Activated CD8-positive, alpha-beta memory T cell treated with anti-CD3 and anti-CD28 coated beads, Interleukin-2, amount 10 ng/mL, durations not matched to agents 7 days and 5 days (primary cell): ENCODE measurements at regions of chr3 and their contacts with region 1.

Region 1: GRCh38 chr3:129593595-129594339 is 12.7 kb downstream of the PLXND1 start:
- DNase-seq: peak; percentile 90
- ATAC-seq: peak; percentile 69
- H3K4me3 Mint-ChIP-seq: peak overlapping the region; percentile 41
- H3K27ac Mint-ChIP-seq: peak overlapping the region; percentile 72
- H3K4me1 Mint-ChIP-seq: peaks cover 28% of the 10 kb centered on the region
- H3K27me3 Mint-ChIP-seq: peaks cover 67% of the 10 kb centered on the region

Region 2: DNA sequence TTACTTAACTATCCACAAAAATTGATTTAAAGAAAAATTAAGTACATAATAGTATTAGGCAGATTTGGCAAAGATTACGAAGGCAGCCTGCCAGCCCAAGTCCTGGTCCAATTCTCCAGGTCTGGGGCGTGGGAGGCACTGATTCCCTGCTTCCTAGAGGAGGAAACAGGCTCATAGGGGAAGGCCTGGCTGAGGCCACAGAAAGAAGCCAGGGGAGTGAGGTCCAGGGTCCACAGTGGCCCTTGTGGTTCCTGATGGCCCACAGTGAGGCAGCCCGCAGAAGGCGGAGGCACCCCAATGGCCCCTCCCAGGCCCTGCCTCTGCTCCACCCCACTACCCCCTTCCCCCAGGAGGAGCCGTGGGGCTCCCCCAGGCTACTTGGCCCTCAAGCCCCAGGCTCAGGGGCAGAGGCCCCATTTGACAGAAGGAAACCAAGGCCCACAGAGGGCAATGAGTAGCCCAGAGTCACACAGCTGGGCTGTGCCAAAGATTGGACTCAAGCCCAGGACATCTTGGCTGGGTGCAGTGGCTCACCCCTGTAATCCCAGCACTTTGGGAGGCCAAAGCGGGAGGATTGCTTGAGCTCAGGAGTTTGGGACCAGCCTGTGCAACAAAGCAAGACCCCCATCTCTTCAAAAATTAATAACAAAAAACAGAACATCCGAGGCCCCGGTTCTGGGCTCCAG is 29.8 kb before region 1 on chr3:
- CTCF ChIA-PET with region 1: no interaction called
- DNase-seq: no peak
- ATAC-seq: no peak
- H3K4me3 Mint-ChIP-seq: no peak overlapping the region
- H3K27ac Mint-ChIP-seq: no peak overlapping the region
- H3K4me1 Mint-ChIP-seq: peaks cover 2% of the 10 kb centered on the region
- H3K27me3 Mint-ChIP-seq: no peaks in the 10 kb centered on the region

Region 3: DNA sequence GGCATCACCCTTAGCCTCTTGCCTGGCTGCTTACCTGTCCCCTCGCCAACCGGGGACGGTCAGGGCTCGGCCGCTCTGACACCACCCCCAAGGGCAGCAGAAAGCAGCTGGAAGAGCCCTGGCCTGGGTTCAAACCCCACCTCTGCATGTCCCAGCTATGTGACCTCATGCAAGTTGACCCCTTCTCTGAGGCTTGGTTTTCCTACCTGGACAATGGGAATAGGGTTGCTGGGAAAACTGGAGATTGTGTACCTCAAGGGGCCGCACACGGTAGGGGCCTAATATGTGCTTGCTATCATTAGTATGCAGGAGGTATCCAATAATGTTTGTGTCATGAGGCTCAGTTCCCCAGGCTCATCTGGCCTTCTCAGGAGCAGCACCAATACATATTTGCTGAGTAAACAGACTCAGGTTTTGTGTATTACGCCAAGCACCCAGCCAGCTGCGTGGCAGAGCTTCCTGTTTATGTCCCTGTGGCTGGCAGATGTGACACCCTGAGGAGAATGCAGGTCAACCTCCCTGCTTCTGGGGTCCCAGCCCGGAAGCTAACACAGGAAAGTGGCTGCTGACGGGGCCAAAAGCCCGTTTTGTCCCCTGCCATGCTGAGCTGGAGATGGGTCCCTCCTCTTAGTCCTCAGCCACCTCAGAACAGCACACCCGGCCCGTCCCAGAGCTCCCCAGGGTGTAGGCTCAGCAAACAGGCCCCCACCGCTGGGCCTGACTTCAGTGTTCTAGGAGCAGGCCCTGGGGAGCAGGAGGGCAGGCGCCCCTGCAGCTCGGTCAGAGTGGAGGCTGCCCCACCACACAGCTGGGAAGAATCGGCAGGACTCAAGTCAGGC is 17.0 kb before region 1 on chr3:
- CTCF ChIA-PET with region 1: interaction called, 10 read pairs
- DNase-seq: peak; percentile 84
- ATAC-seq: peak; percentile 82
- H3K4me3 Mint-ChIP-seq: no peak overlapping the region
- H3K27ac Mint-ChIP-seq: peak overlapping the region; percentile 88
- H3K4me1 Mint-ChIP-seq: peaks cover 27% of the 10 kb centered on the region
- H3K27me3 Mint-ChIP-seq: no peaks in the 10 kb centered on the region

Region 4: GRCh38 chr3:129616713-129617112 is 22.9 kb after region 1 on chr3:
- CTCF ChIA-PET with region 1: no interaction called
- DNase-seq: no peak
- ATAC-seq: no peak
- H3K4me3 Mint-ChIP-seq: no peak overlapping the region
- H3K27ac Mint-ChIP-seq: no peak overlapping the region
- H3K4me1 Mint-ChIP-seq: peaks cover 5% of the 10 kb centered on the region
- H3K27me3 Mint-ChIP-seq: peaks cover 5% of the 10 kb centered on the region